Naive thymus-derived CD4-positive, alpha-beta T cell (primary cell): ENCODE measurements at regions of chr3 and their contacts with region 1.

Region 1: DNA sequence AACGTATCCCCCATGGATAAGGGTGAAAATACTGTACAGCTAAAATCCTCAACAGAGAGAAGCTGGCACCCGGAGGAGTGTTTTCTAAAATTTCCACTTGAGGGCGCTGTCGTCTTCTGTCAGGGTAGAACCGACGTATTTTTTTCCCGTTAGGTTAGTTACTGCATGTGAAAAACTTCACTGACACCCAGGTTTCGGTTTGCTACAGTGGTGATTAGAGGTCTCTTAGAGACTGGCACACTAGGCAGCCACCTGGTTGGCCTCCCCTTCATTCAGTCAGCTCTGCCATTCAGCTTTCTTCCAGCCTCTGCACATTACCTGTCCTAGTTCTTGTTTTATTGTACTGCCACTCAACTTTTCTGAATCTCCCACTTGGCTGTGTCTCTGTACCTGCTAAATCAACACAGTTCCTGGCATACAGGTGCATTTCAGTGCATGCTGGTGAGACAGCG is 18.4 kb downstream of the CCK start:
- DNase-seq: peak in 8 of 9 donors; percentile 39 to 81 (median 66)
- ATAC-seq: peak; percentile 69
- H3K4me3 ChIP-seq: no peak overlapping the region
- H3K4me3 Mint-ChIP-seq: peak overlapping the region in 7 of 10 donors; percentile 15 to 60 (median 30)
- H3K27ac ChIP-seq: no peak overlapping the region
- H3K27ac Mint-ChIP-seq: peak overlapping the region in 5 of 9 donors; percentile 32 to 78 (median 60)
- H3K4me1 ChIP-seq: no peaks in the 10 kb centered on the region
- H3K4me1 Mint-ChIP-seq: peaks cover 2 to 11% (median 8%) of the 10 kb centered on the region in 7 donors
- H3K27me3 ChIP-seq: no peaks in the 10 kb centered on the region
- H3K27me3 Mint-ChIP-seq: peaks cover 0 to 39% (median 0%) of the 10 kb centered on the region in 5 donors

Region 2: GRCh38 chr3:42434777-42435380 is 187.3 kb after region 1 on chr3:
- CTCF ChIA-PET with region 1: interaction called, 22 read pairs
- POLR2A ChIA-PET with region 1: no interaction called
- intact Hi-C with region 1: no loop called
- DNase-seq: no peak
- ATAC-seq: no peak
- H3K4me3 ChIP-seq: no peak overlapping the region
- H3K4me3 Mint-ChIP-seq: no peak overlapping the region
- H3K27ac ChIP-seq: no peak overlapping the region
- H3K27ac Mint-ChIP-seq: no peak overlapping the region
- H3K4me1 ChIP-seq: no peaks in the 10 kb centered on the region
- H3K4me1 Mint-ChIP-seq: no peaks in the 10 kb centered on the region
- H3K27me3 ChIP-seq: no peaks in the 10 kb centered on the region
- H3K27me3 Mint-ChIP-seq: peaks cover 0 to 9% (median 0%) of the 10 kb centered on the region in 5 donors

Region 3: DNA sequence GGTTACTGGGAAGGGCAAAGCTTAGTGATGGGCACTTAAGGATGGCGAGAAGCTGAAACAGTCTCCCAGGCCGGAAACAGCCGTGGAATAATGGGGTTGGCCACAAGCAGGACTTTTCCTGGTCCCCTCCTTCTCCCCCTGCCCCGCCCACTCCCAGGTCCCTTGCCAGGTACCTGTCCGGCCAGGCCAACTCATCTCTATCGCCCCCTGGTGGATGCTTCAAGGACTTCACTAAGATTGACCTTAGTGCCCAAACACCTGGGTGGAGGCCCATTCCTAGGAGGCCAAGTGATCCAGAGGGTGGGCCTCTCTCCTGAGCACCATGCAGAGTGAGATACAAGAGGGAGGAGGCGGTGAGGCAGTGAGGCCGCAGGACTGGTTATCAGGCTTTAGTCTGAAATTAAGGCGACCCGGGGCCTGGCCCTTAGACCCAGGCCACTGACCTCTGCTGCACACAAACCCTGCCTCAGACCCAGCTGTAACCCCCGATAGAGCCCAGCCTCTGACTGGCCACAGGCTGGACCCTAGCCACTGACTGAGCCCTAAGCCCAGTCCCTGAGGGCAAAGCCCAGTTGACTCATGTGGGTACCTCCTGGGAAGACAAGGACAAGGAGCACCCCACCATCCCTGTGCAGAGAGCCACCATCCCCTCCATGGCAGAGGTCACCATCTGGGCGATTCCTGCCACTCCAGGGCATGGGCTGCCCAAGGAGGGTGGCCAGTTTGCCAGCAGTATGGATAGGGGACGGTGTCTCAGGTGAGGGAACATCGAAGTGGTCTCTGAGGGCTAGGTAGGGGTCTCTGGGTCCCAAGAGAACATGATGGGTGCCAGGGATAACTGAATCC is 292.5 kb after region 1 on chr3:
- CTCF ChIA-PET with region 1: interaction called, 4 read pairs
- POLR2A ChIA-PET with region 1: no interaction called
- intact Hi-C with region 1: loop called (anchors 1 kb)
- DNase-seq: peak in 8 of 9 donors; percentile 31 to 69 (median 48)
- ATAC-seq: peak; percentile 76
- H3K4me3 ChIP-seq: no peak overlapping the region
- H3K4me3 Mint-ChIP-seq: no peak overlapping the region
- H3K27ac ChIP-seq: no peak overlapping the region
- H3K27ac Mint-ChIP-seq: peak overlapping the region in 7 of 9 donors; percentile 33 to 95 (median 67)
- H3K4me1 ChIP-seq: peaks cover 0 to 9% of the 10 kb centered on the region in 2 donors
- H3K4me1 Mint-ChIP-seq: peaks cover 2 to 36% (median 31%) of the 10 kb centered on the region in 7 donors
- H3K27me3 ChIP-seq: no peaks in the 10 kb centered on the region
- H3K27me3 Mint-ChIP-seq: no peaks in the 10 kb centered on the region

Region 4: GRCh38 chr3:42547401-42547945 is 299.9 kb after region 1 on chr3:
- CTCF ChIA-PET with region 1: interaction called, 4 read pairs
- POLR2A ChIA-PET with region 1: no interaction called
- intact Hi-C with region 1: loop called in 1 of 2 experiments (anchors 2 kb)
- DNase-seq: peak; percentile 37 to 73 (median 57)
- ATAC-seq: peak; percentile 84
- H3K4me3 ChIP-seq: no peak overlapping the region
- H3K4me3 Mint-ChIP-seq: no peak overlapping the region
- H3K27ac ChIP-seq: no peak overlapping the region
- H3K27ac Mint-ChIP-seq: peak overlapping the region in 4 of 9 donors; percentile 14 to 37 (median 29)
- H3K4me1 ChIP-seq: no peaks in the 10 kb centered on the region
- H3K4me1 Mint-ChIP-seq: peaks cover 0 to 15% (median 6%) of the 10 kb centered on the region in 7 donors
- H3K27me3 ChIP-seq: no peaks in the 10 kb centered on the region
- H3K27me3 Mint-ChIP-seq: no peaks in the 10 kb centered on the region

Region 5: GRCh38 chr3:42749753-42750231 is 502.2 kb after region 1 on chr3:
- CTCF ChIA-PET with region 1: no interaction called
- POLR2A ChIA-PET with region 1: no interaction called
- intact Hi-C with region 1: loop called (anchors 5 to 10 kb)
- DNase-seq: no peak
- ATAC-seq: peak; percentile 63
- H3K4me3 ChIP-seq: no peak overlapping the region
- H3K4me3 Mint-ChIP-seq: peak overlapping the region in 1 of 10 donors; percentile 12
- H3K27ac ChIP-seq: no peak overlapping the region
- H3K27ac Mint-ChIP-seq: peak overlapping the region in 4 of 9 donors; percentile 17 to 65 (median 36)
- H3K4me1 ChIP-seq: peaks cover 15 to 38% of the 10 kb centered on the region in 2 donors
- H3K4me1 Mint-ChIP-seq: peaks cover 16 to 40% (median 31%) of the 10 kb centered on the region in 7 donors
- H3K27me3 ChIP-seq: no peaks in the 10 kb centered on the region
- H3K27me3 Mint-ChIP-seq: no peaks in the 10 kb centered on the region